Activated CD8-positive, alpha-beta T cell treated with anti-CD3 and anti-CD28 coated beads for 36 hours (primary cell): ENCODE measurements at regions of chr4 and their contacts with region 1.

Region 1: DNA sequence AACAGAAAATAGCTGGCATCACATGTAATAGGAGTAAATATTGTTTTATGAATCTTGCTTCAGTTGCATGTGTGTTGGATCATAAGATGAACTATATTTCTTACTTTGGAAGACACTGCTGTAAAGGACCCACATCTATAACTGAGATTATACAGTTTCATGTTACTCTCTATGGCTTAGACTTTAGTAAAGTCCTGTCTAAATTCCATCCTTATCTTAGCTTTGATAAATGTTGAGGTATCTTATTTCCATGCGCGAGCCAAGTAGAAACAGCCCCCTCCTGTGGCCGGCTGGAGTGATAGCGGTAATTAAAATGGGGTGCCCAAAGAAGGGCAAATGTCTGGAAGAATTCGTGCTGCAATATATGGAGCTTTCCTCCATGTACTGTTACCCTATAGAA is 43.0 kb downstream of the CCDC158 start:
- DNase-seq: peak; percentile 61
- ATAC-seq: peak; percentile 34
- H3K4me3 Mint-ChIP-seq: no peak overlapping the region
- H3K27ac Mint-ChIP-seq: no peak overlapping the region
- H3K4me1 Mint-ChIP-seq: no peaks in the 10 kb centered on the region
- H3K27me3 Mint-ChIP-seq: peaks cover 2% of the 10 kb centered on the region
- CTCF ChIP-seq: peak; percentile 69

Region 2: GRCh38 chr4:76251441-76252270 is 126.3 kb before region 1 on chr4 and contains the start of gene FAM47E:
- CTCF ChIA-PET with region 1: interaction called, 17 read pairs
- POLR2A ChIA-PET with region 1: no interaction called
- intact Hi-C with region 1: no loop called
- DNase-seq: peak; percentile 57
- ATAC-seq: peak; percentile 86
- H3K4me3 Mint-ChIP-seq: peak within 1 kb of the TSS; percentile 73
- H3K27ac Mint-ChIP-seq: no peak within 1 kb of the TSS
- H3K4me1 Mint-ChIP-seq: peaks cover 6% of the 10 kb centered on the region
- H3K27me3 Mint-ChIP-seq: peaks cover 59% of the 10 kb centered on the region
- CTCF ChIP-seq: peak; percentile 49
- total RNA-seq, gene FAM47E: not detected

Region 3: GRCh38 chr4:76279472-76279871 is 98.4 kb before region 1 on chr4:
- CTCF ChIA-PET with region 1: interaction called, 58 read pairs
- POLR2A ChIA-PET with region 1: no interaction called
- intact Hi-C with region 1: loop called (anchors 10 kb)
- DNase-seq: peak; percentile 53
- ATAC-seq: peak; percentile 58
- H3K4me3 Mint-ChIP-seq: no peak overlapping the region
- H3K27ac Mint-ChIP-seq: no peak overlapping the region
- H3K4me1 Mint-ChIP-seq: peaks cover 2% of the 10 kb centered on the region
- H3K27me3 Mint-ChIP-seq: peaks cover 8% of the 10 kb centered on the region
- CTCF ChIP-seq: peak; percentile 43

Region 4: GRCh38 chr4:76301068-76301774 is 76.7 kb before region 1 on chr4:
- CTCF ChIA-PET with region 1: interaction called, 13 read pairs
- POLR2A ChIA-PET with region 1: no interaction called
- intact Hi-C with region 1: no loop called
- DNase-seq: peak; percentile 60
- ATAC-seq: peak; percentile 82
- H3K4me3 Mint-ChIP-seq: no peak overlapping the region
- H3K27ac Mint-ChIP-seq: no peak overlapping the region
- H3K4me1 Mint-ChIP-seq: peaks cover 36% of the 10 kb centered on the region
- H3K27me3 Mint-ChIP-seq: peaks cover 12% of the 10 kb centered on the region
- CTCF ChIP-seq: no peak

Region 5: DNA sequence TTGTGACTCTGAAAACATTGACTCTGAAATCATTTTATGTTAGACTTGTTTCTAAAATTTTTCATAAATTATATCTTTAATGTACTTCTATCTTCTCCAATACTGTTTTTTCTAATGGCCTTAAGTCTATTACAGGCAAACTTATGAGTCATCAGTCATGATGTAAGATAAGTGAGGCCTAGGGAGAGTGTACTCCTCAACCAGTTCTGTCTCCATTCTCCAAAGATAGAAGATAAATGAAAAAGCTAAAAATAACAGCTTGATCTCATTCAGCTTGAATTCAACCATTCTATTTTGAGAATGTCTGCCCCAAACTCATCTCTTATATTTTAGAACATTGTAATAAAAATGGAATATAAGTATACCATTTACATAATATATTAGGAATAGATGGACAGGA is 36.8 kb before region 1 on chr4:
- CTCF ChIA-PET with region 1: interaction called, 10 read pairs
- POLR2A ChIA-PET with region 1: no interaction called
- intact Hi-C with region 1: no loop called
- DNase-seq: no peak
- ATAC-seq: no peak
- H3K4me3 Mint-ChIP-seq: no peak overlapping the region
- H3K27ac Mint-ChIP-seq: no peak overlapping the region
- H3K4me1 Mint-ChIP-seq: peaks cover 2% of the 10 kb centered on the region
- H3K27me3 Mint-ChIP-seq: peaks cover 1% of the 10 kb centered on the region
- CTCF ChIP-seq: no peak

Region 6: GRCh38 chr4:76388160-76388908 is 10.4 kb after region 1 on chr4:
- CTCF ChIA-PET with region 1: interaction called, 12 read pairs
- POLR2A ChIA-PET with region 1: no interaction called
- intact Hi-C with region 1: no loop called
- DNase-seq: no peak
- ATAC-seq: no peak
- H3K4me3 Mint-ChIP-seq: no peak overlapping the region
- H3K27ac Mint-ChIP-seq: no peak overlapping the region
- H3K4me1 Mint-ChIP-seq: no peaks in the 10 kb centered on the region
- H3K27me3 Mint-ChIP-seq: peaks cover 27% of the 10 kb centered on the region
- CTCF ChIP-seq: no peak

Region 7: DNA sequence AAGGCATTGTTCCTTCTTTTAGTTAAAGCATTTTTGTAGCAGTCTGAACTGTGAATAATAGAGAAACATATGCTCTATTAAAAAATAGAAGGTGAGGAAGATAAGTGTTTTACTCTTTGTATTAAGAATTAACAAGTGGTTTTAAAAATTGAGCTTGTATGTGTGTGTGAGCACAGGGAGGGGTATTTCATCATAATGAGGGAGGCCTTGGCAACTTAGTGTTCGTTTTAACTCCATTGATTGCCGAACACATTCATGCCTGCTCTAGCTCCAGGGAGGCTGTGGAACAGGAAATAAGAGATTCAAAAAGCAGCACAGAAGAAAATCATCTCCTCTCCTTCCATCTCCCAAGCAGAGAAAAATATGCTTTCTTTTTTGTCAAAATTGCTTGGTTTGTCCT is 71.9 kb after region 1 on chr4:
- CTCF ChIA-PET with region 1: no interaction called
- POLR2A ChIA-PET with region 1: no interaction called
- intact Hi-C with region 1: no loop called
- DNase-seq: no peak
- ATAC-seq: no peak
- H3K4me3 Mint-ChIP-seq: no peak overlapping the region
- H3K27ac Mint-ChIP-seq: no peak overlapping the region
- H3K4me1 Mint-ChIP-seq: peaks cover 2% of the 10 kb centered on the region
- H3K27me3 Mint-ChIP-seq: peaks cover 10% of the 10 kb centered on the region
- CTCF ChIP-seq: no peak

Region 8: DNA sequence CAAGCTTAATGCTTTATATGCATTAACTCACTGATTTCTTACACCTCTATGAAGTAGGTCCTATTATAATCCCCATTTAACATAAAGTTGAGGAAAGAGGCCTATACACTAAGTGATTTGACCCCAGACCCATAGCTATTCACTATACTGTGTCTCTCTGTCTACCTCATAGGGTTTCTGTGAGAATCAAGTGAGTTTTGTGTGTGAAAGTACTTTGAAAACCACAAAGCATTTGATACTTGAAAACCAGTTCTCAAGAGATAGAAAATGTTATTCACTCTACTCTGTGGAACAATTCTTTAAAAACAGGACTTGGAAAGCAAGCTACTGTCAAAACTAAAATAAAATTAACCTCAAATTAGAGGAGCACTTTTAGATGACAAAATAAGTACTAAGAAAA is 92.2 kb after region 1 on chr4:
- CTCF ChIA-PET with region 1: no interaction called
- POLR2A ChIA-PET with region 1: no interaction called
- intact Hi-C with region 1: no loop called
- DNase-seq: no peak
- ATAC-seq: no peak
- H3K4me3 Mint-ChIP-seq: no peak overlapping the region
- H3K27ac Mint-ChIP-seq: no peak overlapping the region
- H3K4me1 Mint-ChIP-seq: no peaks in the 10 kb centered on the region
- H3K27me3 Mint-ChIP-seq: peaks cover 5% of the 10 kb centered on the region
- CTCF ChIP-seq: no peak

Region 9: GRCh38 chr4:76546282-76547171 is 168.6 kb after region 1 on chr4:
- CTCF ChIA-PET with region 1: no interaction called
- POLR2A ChIA-PET with region 1: no interaction called
- intact Hi-C with region 1: no loop called
- DNase-seq: no peak
- ATAC-seq: no peak
- H3K4me3 Mint-ChIP-seq: no peak overlapping the region
- H3K27ac Mint-ChIP-seq: no peak overlapping the region
- H3K4me1 Mint-ChIP-seq: peaks cover 12% of the 10 kb centered on the region
- H3K27me3 Mint-ChIP-seq: peaks cover 4% of the 10 kb centered on the region
- CTCF ChIP-seq: no peak

Region 10: GRCh38 chr4:76562161-76562560 is 184.2 kb after region 1 on chr4:
- CTCF ChIA-PET with region 1: no interaction called
- POLR2A ChIA-PET with region 1: no interaction called
- intact Hi-C with region 1: no loop called
- DNase-seq: no peak
- ATAC-seq: no peak
- H3K4me3 Mint-ChIP-seq: no peak overlapping the region
- H3K27ac Mint-ChIP-seq: no peak overlapping the region
- H3K4me1 Mint-ChIP-seq: peaks cover 14% of the 10 kb centered on the region
- H3K27me3 Mint-ChIP-seq: peaks cover 7% of the 10 kb centered on the region
- CTCF ChIP-seq: no peak